Caco-2 (cell line): ENCODE measurements at regions of chr10 and their contacts with region 1.

Region 1: GRCh38 chr10:49407552-49408137 is 11.8 kb upstream of the DRGX start:
- DNase-seq: peak; percentile 84 to 91
- H3K4me3 ChIP-seq: no peak overlapping the region
- H3K4me3 Mint-ChIP-seq: no peak overlapping the region
- H3K27ac Mint-ChIP-seq: no peak overlapping the region
- H3K4me1 ChIP-seq: peaks cover 3% of the 10 kb centered on the region; the same call in 1 of the 2 replicates
- H3K4me1 Mint-ChIP-seq: peaks cover 6% of the 10 kb centered on the region
- H3K27me3 ChIP-seq: no peaks in the 10 kb centered on the region; the same call in 1 of the 2 replicates
- H3K27me3 Mint-ChIP-seq: peaks cover 14% of the 10 kb centered on the region
- CTCF ChIP-seq: peak; percentile 95 to 98

Region 2: DNA sequence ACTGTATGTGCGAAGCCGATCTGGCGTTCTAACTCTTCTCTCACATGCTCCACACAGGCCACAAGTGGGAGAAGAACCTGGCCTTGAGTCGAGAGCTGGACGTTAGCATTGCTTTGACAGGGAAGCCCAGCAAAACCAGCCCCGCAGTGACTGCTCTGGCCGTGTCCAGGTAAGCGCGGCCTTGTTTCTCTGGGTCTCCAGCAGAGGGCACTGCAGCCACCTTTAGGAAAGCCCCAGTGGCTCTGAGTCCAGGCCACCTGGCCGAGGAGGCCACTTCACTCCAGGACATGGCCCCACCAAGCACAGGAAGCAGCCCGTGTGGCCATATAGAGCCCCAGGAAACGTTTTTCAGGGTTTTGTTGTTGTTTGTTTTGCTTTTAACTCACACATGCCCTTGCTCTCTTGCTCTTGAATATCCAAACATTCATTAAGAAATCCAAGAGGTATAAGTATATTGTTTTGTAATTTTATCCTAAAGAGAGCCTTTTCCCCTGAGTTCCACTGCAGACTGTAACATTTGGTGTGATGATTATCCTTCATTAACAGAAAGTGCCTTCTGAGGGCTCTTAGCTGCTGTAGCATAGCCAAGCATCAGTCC is 426.2 kb before region 1 on chr10:
- CTCF ChIA-PET with region 1: interaction called, 3 read pairs
- POLR2A ChIA-PET with region 1: no interaction called
- intact Hi-C with region 1: loop called (anchors 1 kb)
- DNase-seq: peak; percentile 75 to 80
- H3K4me3 ChIP-seq: no peak overlapping the region
- H3K4me3 Mint-ChIP-seq: no peak overlapping the region
- H3K27ac Mint-ChIP-seq: no peak overlapping the region
- H3K4me1 ChIP-seq: no peaks in the 10 kb centered on the region
- H3K4me1 Mint-ChIP-seq: no peaks in the 10 kb centered on the region
- H3K27me3 ChIP-seq: no peaks in the 10 kb centered on the region
- H3K27me3 Mint-ChIP-seq: peaks cover 18% of the 10 kb centered on the region
- CTCF ChIP-seq: peak; percentile 87 to 93

Region 3: GRCh38 chr10:49049660-49050059 is 358.0 kb before region 1 on chr10:
- CTCF ChIA-PET with region 1: no interaction called
- POLR2A ChIA-PET with region 1: no interaction called
- intact Hi-C with region 1: no loop called
- DNase-seq: no peak
- H3K4me3 ChIP-seq: no peak overlapping the region
- H3K4me3 Mint-ChIP-seq: no peak overlapping the region
- H3K27ac Mint-ChIP-seq: no peak overlapping the region
- H3K4me1 ChIP-seq: no peaks in the 10 kb centered on the region
- H3K4me1 Mint-ChIP-seq: no peaks in the 10 kb centered on the region
- H3K27me3 ChIP-seq: peaks cover 1% of the 10 kb centered on the region
- H3K27me3 Mint-ChIP-seq: peaks cover 36% of the 10 kb centered on the region
- CTCF ChIP-seq: no peak

Region 4: GRCh38 chr10:49419005-49419404 is 11.4 kb after region 1 on chr10:
- CTCF ChIA-PET with region 1: interaction called, 12 read pairs
- POLR2A ChIA-PET with region 1: interaction called, 3 read pairs
- intact Hi-C with region 1: loop called (anchors 1 kb)
- DNase-seq: peak; percentile 94 to 96
- H3K4me3 ChIP-seq: no peak overlapping the region
- H3K4me3 Mint-ChIP-seq: peak overlapping the region; percentile 57
- H3K27ac Mint-ChIP-seq: peak overlapping the region; percentile 93
- H3K4me1 ChIP-seq: peaks cover 12% of the 10 kb centered on the region
- H3K4me1 Mint-ChIP-seq: peaks cover 5% of the 10 kb centered on the region
- H3K27me3 ChIP-seq: no peaks in the 10 kb centered on the region
- H3K27me3 Mint-ChIP-seq: no peaks in the 10 kb centered on the region
- CTCF ChIP-seq: peak in 1 of 2 experiments; percentile 48

Region 5: GRCh38 chr10:49500418-49500817 is 92.8 kb after region 1 on chr10:
- CTCF ChIA-PET with region 1: interaction called, 12 read pairs
- POLR2A ChIA-PET with region 1: no interaction called
- intact Hi-C with region 1: no loop called
- DNase-seq: peak in 1 of 2 experiments; percentile 15
- H3K4me3 ChIP-seq: no peak overlapping the region
- H3K4me3 Mint-ChIP-seq: no peak overlapping the region
- H3K27ac Mint-ChIP-seq: no peak overlapping the region
- H3K4me1 ChIP-seq: no peaks in the 10 kb centered on the region
- H3K4me1 Mint-ChIP-seq: no peaks in the 10 kb centered on the region
- H3K27me3 ChIP-seq: no peaks in the 10 kb centered on the region
- H3K27me3 Mint-ChIP-seq: no peaks in the 10 kb centered on the region
- CTCF ChIP-seq: no peak

Region 6: GRCh38 chr10:49512121-49512809 is 104.6 kb after region 1 on chr10:
- CTCF ChIA-PET with region 1: interaction called, 133 read pairs
- POLR2A ChIA-PET with region 1: no interaction called
- intact Hi-C with region 1: loop called (anchors 1 kb)
- DNase-seq: peak in 1 of 2 experiments; percentile 53
- H3K4me3 ChIP-seq: no peak overlapping the region
- H3K4me3 Mint-ChIP-seq: no peak overlapping the region
- H3K27ac Mint-ChIP-seq: no peak overlapping the region
- H3K4me1 ChIP-seq: no peaks in the 10 kb centered on the region
- H3K4me1 Mint-ChIP-seq: no peaks in the 10 kb centered on the region
- H3K27me3 ChIP-seq: no peaks in the 10 kb centered on the region
- H3K27me3 Mint-ChIP-seq: no peaks in the 10 kb centered on the region
- CTCF ChIP-seq: peak; percentile 81 to 90

Region 7: GRCh38 chr10:49538381-49539319 is 131.0 kb after region 1 on chr10 and contains the start of gene ERCC6:
- CTCF ChIA-PET with region 1: interaction called, 18 read pairs
- POLR2A ChIA-PET with region 1: no interaction called
- intact Hi-C with region 1: no loop called
- DNase-seq: peak; percentile 99
- H3K4me3 ChIP-seq: peak within 1 kb of the TSS; percentile 54
- H3K4me3 Mint-ChIP-seq: peak within 1 kb of the TSS; percentile 93
- H3K27ac Mint-ChIP-seq: peak within 1 kb of the TSS; percentile 96
- H3K4me1 ChIP-seq: no peaks in the 10 kb centered on the region
- H3K4me1 Mint-ChIP-seq: no peaks in the 10 kb centered on the region
- H3K27me3 ChIP-seq: no peaks in the 10 kb centered on the region
- H3K27me3 Mint-ChIP-seq: peaks cover 1% of the 10 kb centered on the region
- CTCF ChIP-seq: peak in 1 of 2 experiments; percentile 24
- total RNA-seq, gene ERCC6: 30.2 and 32.0 TPM in 2 replicates